ENCODE measurements at regions of chr11 and their contacts with region 1.

Region 1: DNA sequence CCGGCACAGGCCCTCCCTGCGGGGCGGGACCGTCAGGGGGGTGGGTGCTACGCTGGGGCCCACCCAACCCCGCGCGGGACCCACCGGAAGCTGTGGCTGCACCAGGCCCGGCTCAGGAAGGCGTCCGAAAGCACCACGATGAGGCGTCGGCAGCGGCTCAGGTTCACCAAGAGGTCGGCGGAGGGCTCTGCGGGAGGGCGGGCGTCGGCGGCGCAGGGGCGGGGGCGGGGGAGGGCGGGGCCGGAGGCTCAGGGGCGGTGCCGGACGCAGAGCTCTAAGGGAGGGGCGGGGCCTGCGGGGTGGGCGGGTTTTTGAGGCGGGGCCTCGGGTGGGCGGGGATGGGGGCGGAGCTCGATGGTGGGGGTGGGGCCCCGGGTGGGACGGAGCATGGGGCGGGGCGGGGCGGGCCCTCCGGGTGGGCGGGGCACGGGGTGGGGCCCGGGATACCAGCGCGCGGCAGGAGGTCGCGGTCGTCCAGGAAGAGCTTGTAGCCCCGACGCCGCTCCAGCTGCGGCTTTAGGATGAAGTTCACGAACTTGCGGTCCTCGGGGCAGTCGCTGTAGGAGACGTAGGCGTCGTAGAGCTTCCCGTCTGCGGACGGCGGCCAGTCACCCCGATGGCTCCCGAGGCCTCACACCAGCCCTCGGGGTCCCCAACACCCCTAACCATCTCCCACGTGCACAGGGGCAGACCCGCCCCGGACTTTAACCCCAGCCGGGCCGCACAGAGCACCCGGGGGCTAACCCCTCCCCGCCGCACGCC is 7.6 kb downstream of the SIGIRR start:
- DNase-seq: peak; percentile 62 to 98 (median 95)
- ATAC-seq: peak; percentile 90 to 95
- H3K4me3 Mint-ChIP-seq: peak overlapping the region in 7 of 10 donors; percentile 22 to 76 (median 58)
- H3K27ac Mint-ChIP-seq: peak overlapping the region in 9 of 10 donors; percentile 43 to 93 (median 79)
- H3K4me1 Mint-ChIP-seq: peaks cover 7 to 31% (median 15%) of the 10 kb centered on the region in 4 donors
- H3K27me3 Mint-ChIP-seq: no peaks in the 10 kb centered on the region

Region 2: DNA sequence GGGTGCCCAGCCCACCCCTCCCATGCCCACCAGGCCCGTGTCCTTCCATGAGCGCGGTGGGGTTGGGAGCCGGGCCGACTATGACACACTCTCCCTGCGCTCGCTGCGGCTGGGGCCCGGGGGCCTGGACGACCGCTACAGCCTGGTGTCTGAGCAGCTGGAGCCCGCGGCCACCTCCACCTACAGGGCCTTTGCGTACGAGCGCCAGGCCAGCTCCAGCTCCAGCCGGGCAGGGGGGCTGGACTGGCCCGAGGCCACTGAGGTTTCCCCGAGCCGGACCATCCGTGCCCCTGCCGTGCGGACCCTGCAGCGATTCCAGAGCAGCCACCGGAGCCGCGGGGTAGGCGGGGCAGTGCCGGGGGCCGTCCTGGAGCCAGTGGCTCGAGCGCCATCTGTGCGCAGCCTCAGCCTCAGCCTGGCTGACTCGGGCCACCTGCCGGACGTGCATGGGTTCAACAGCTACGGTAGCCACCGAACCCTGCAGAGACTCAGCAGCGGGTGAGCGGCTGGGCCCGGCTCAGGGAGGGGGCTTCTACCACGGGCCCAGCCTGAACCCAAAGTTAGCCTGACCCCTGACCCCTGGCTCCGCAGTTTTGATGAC is 10.1 kb before region 1 on chr11:
- POLR2A ChIA-PET with region 1: interaction called, 19 read pairs
- DNase-seq: peak in 6 of 10 donors; percentile 29 to 54 (median 45)
- ATAC-seq: peak; percentile 78 to 92
- H3K4me3 Mint-ChIP-seq: peak overlapping the region in 5 of 10 donors; percentile 14 to 59 (median 38)
- H3K27ac Mint-ChIP-seq: no peak overlapping the region
- H3K4me1 Mint-ChIP-seq: peaks cover 0 to 6% (median 4%) of the 10 kb centered on the region in 4 donors
- H3K27me3 Mint-ChIP-seq: peaks cover 0 to 4% (median 0%) of the 10 kb centered on the region in 5 donors

Region 3: DNA sequence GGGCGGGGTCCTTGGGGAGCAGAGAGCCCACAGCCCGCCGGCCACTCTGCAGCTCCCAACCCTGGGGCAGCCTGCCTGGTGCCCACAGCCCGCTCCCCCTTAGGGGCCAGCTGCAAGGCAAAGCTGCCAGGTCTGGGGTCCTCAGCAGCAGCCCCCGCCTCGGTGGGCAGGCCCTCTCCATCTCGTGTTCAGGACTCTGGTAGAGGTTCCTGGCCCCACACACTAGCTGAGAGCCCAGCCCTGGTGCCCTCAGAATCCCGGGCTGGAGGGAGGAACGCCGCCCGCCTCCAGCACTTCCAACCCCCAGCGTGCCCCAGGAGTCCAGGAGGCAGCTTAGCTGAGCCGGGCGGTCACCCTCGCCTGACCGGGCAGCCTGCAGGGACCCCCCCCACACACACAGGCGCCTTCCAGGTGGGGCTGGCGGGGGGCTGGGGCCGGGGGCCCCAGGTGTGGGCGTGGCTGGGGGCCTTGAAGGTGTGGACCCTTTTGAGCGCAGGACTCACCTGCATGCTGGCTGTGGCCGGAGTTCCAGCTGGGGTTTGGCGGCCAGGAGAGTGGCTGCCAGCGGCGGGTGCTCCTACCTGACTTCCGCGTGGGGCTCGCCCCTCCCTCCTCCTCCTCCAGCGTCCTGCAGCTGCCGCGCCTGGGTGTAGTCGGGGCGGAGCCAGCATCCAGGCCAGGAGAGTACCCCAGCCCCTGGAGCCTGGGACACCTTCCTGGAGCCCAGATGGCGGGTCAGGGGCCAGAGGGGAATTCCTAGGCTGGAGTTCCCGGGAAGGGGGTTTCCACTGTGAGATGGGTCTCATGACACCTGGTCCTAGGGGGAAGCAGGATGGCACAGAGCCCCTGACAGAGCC is 34.5 kb after region 1 on chr11 and contains the start of gene ANO9:
- POLR2A ChIA-PET with region 1: interaction called, 144 read pairs
- DNase-seq: peak; percentile 35 to 74 (median 53)
- ATAC-seq: peak; percentile 95 to 98
- H3K4me3 Mint-ChIP-seq: peak within 1 kb of the TSS; percentile 60 to 84 (median 72)
- H3K27ac Mint-ChIP-seq: peak within 1 kb of the TSS in 8 of 10 donors; percentile 41 to 87 (median 62)
- H3K4me1 Mint-ChIP-seq: peaks cover 9 to 33% (median 27%) of the 10 kb centered on the region in 4 donors
- H3K27me3 Mint-ChIP-seq: no peaks in the 10 kb centered on the region
- polyA plus RNA-seq, gene ANO9: 4.8 to 8.6 (median 7.3) TPM

Measured in naive thymus-derived CD8-positive, alpha-beta T cell (primary cell).